CD4-positive, alpha-beta memory T cell (primary cell): ENCODE measurements at regions of chr3 and their contacts with region 1.

Region 1: GRCh38 chr3:66500576-66501482 is at the start of gene LRIG1:
- DNase-seq: peak; percentile 97 to 98 (median 97)
- H3K4me3 ChIP-seq: peak within 1 kb of the TSS; percentile 9 to 72
- H3K4me3 Mint-ChIP-seq: peak within 1 kb of the TSS; percentile 93 to 99 (median 98)
- H3K27ac ChIP-seq: peak within 1 kb of the TSS; percentile 61
- H3K27ac Mint-ChIP-seq: peak within 1 kb of the TSS; percentile 82 to 96 (median 89)
- H3K4me1 ChIP-seq: peaks cover 61% of the 10 kb centered on the region
- H3K4me1 Mint-ChIP-seq: peaks cover 50 to 73% (median 59%) of the 10 kb centered on the region in 4 donors
- H3K27me3 ChIP-seq: no peaks in the 10 kb centered on the region
- H3K27me3 Mint-ChIP-seq: no peaks in the 10 kb centered on the region
- total RNA-seq, gene LRIG1: 66.3 to 71.7 TPM

Region 2: GRCh38 chr3:65861718-65862117 is 639.1 kb before region 1 on chr3:
- CTCF ChIA-PET with region 1: no interaction called
- POLR2A ChIA-PET with region 1: no interaction called
- intact Hi-C with region 1: no loop called
- DNase-seq: no peak
- H3K4me3 ChIP-seq: no peak overlapping the region
- H3K4me3 Mint-ChIP-seq: no peak overlapping the region
- H3K27ac ChIP-seq: no peak overlapping the region
- H3K27ac Mint-ChIP-seq: no peak overlapping the region
- H3K4me1 ChIP-seq: no peaks in the 10 kb centered on the region
- H3K4me1 Mint-ChIP-seq: no peaks in the 10 kb centered on the region
- H3K27me3 ChIP-seq: no peaks in the 10 kb centered on the region
- H3K27me3 Mint-ChIP-seq: no peaks in the 10 kb centered on the region

Region 3: DNA sequence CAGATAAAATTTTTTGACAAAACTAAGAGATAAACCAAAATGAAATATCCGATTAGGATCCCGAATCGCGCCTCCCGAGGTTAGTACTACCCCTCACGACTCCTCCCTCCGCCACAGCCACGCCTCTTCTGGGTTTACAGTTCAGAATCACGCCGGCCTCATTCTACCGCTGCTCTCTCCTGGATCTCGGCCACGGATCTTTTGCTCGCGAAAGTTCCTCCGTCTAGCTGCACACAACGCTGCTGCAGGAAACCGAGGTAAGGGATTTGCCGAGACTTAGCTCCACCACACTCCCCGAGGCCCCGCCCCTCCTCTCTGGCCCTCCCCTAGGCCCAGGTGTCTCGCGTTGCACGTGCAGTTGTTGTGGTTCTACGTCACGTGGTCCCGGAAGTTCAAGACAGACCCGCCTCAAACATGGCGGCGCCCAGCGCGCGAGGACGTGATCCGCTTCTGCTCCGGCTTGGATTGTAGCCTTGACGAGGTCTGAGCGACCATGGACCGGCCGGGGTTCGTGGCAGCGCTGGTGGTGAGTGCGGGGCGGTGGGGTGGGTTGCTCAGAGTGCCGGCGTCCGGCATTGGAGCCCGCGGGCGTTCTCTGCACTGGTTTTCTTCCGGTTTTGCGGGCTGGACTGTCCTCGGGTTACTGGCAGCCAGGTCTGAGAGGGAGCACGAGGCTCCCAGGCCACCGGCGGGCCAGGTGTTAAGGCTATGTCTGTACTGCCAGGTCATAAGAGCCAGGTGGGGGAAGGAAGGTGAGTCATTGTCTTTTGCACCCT is 280.0 kb before region 1 on chr3 and contains the start of gene SLC25A26:
- CTCF ChIA-PET with region 1: no interaction called
- POLR2A ChIA-PET with region 1: interaction called, 8 read pairs
- intact Hi-C with region 1: loop called (anchors 1 kb)
- DNase-seq: peak; percentile 96 to 100 (median 98)
- H3K4me3 ChIP-seq: peak within 1 kb of the TSS; percentile 67 to 82
- H3K4me3 Mint-ChIP-seq: peak within 1 kb of the TSS; percentile 87 to 99 (median 92)
- H3K27ac ChIP-seq: peak within 1 kb of the TSS; percentile 73
- H3K27ac Mint-ChIP-seq: peak within 1 kb of the TSS; percentile 76 to 99 (median 91)
- H3K4me1 ChIP-seq: peaks cover 15% of the 10 kb centered on the region
- H3K4me1 Mint-ChIP-seq: peaks cover 16 to 44% (median 32%) of the 10 kb centered on the region in 4 donors
- H3K27me3 ChIP-seq: no peaks in the 10 kb centered on the region
- H3K27me3 Mint-ChIP-seq: no peaks in the 10 kb centered on the region
- total RNA-seq, gene SLC25A26: 18.9 to 21.1 TPM

Region 4: GRCh38 chr3:66394019-66394752 is 106.6 kb before region 1 on chr3:
- CTCF ChIA-PET with region 1: no interaction called
- POLR2A ChIA-PET with region 1: interaction called, 12 read pairs
- intact Hi-C with region 1: loop called (anchors 5 kb)
- DNase-seq: peak; percentile 74 to 83 (median 81)
- H3K4me3 ChIP-seq: peak overlapping the region; percentile 44 to 49
- H3K4me3 Mint-ChIP-seq: peak overlapping the region; percentile 75 to 94 (median 90)
- H3K27ac ChIP-seq: peak overlapping the region; percentile 45
- H3K27ac Mint-ChIP-seq: peak overlapping the region; percentile 90 to 99 (median 97)
- H3K4me1 ChIP-seq: peaks cover 59% of the 10 kb centered on the region
- H3K4me1 Mint-ChIP-seq: peaks cover 50 to 61% (median 56%) of the 10 kb centered on the region in 4 donors
- H3K27me3 ChIP-seq: no peaks in the 10 kb centered on the region
- H3K27me3 Mint-ChIP-seq: no peaks in the 10 kb centered on the region

Region 5: DNA sequence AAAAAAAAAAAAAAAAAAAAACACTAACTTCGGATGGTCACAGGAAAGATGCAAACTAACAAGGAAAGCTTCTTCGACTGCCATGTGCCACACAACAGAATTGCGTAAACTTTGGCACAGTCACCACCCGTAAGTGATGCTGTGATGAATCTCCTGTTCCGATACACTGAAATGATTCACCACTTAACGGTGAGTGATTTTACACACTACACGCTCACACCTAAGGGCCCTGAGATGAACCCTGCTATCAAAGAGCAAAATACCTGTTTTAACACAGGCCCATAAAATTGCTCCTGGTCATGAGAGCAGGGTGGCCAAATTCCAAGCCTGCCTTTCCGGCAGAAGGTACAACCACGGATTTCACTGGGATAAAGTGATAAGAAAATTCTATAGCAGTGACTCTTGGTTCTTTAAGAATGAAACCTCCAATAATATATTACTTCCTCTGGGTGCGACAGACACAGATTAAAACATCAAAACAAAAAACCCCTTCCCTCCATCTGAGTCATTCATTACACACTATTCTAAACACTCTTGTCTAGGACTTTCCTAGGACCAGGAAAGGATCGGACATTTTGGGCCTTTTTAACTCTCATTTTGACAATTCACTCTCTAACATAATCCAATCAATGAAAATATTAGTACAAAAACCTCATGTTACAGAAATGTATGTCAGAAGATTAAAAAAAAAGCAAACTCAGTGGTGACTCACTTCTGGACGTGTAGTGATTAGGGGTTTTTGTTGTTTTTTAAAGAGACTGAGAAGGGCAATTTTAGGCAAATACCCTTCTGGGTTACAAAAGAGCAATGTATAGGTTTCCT is 28.3 kb before region 1 on chr3:
- CTCF ChIA-PET with region 1: interaction called, 3 read pairs
- POLR2A ChIA-PET with region 1: interaction called, 13 read pairs
- intact Hi-C with region 1: loop called (anchors 1 kb)
- DNase-seq: peak in 2 of 5 donors; percentile 48 to 74
- H3K4me3 ChIP-seq: peak overlapping the region; percentile 23 to 50
- H3K4me3 Mint-ChIP-seq: peak overlapping the region; percentile 57 to 86 (median 75)
- H3K27ac ChIP-seq: peak overlapping the region; percentile 29
- H3K27ac Mint-ChIP-seq: peak overlapping the region; percentile 0 to 90 (median 77)
- H3K4me1 ChIP-seq: peaks cover 92% of the 10 kb centered on the region
- H3K4me1 Mint-ChIP-seq: peaks cover 30 to 51% (median 41%) of the 10 kb centered on the region in 4 donors
- H3K27me3 ChIP-seq: no peaks in the 10 kb centered on the region
- H3K27me3 Mint-ChIP-seq: no peaks in the 10 kb centered on the region

Region 6: DNA sequence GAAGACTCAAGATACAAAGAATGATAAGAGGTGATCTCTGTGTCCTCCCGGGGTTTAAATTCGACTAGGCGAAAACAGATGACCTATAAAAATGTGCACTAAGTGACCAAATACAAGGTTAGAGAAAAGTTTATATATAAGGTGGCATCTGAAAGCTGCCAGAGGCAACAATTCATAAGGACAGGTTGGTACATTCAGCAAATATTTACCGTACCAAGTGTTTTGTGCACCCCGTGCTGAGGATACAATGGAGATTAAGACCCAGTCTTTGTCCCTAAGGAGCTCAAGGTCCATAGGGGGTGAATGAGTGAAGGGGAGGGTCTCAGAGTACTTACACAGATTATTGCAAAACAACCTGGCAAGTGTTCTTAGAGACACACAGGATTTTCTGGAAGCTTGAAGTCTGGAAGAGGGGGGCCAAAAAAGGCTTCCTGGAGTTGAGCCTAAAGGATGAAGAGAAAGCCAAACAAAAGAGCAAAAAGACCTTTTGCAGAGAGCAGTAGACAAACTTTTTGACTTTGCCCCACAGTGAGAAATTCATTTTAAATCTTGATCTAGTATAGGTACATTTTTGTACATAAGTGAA is 71.4 kb after region 1 on chr3:
- CTCF ChIA-PET with region 1: no interaction called
- POLR2A ChIA-PET with region 1: no interaction called
- intact Hi-C with region 1: no loop called
- DNase-seq: no peak
- H3K4me3 ChIP-seq: no peak overlapping the region
- H3K4me3 Mint-ChIP-seq: no peak overlapping the region
- H3K27ac ChIP-seq: no peak overlapping the region
- H3K27ac Mint-ChIP-seq: no peak overlapping the region
- H3K4me1 ChIP-seq: no peaks in the 10 kb centered on the region
- H3K4me1 Mint-ChIP-seq: peaks cover 0 to 5% (median 3%) of the 10 kb centered on the region in 4 donors
- H3K27me3 ChIP-seq: no peaks in the 10 kb centered on the region
- H3K27me3 Mint-ChIP-seq: peaks cover 0 to 2% of the 10 kb centered on the region in 2 donors

Region 7: GRCh38 chr3:66582721-66583423 is 82.0 kb after region 1 on chr3:
- CTCF ChIA-PET with region 1: no interaction called
- POLR2A ChIA-PET with region 1: interaction called, 5 read pairs
- intact Hi-C with region 1: loop called (anchors 2 kb)
- DNase-seq: peak; percentile 63 to 75 (median 71)
- H3K4me3 ChIP-seq: no peak overlapping the region
- H3K4me3 Mint-ChIP-seq: peak overlapping the region in 5 of 8 donors; percentile 27 to 60 (median 47)
- H3K27ac ChIP-seq: no peak overlapping the region
- H3K27ac Mint-ChIP-seq: peak overlapping the region in 1 of 7 donors; percentile 39
- H3K4me1 ChIP-seq: peaks cover 21% of the 10 kb centered on the region
- H3K4me1 Mint-ChIP-seq: peaks cover 11 to 17% (median 15%) of the 10 kb centered on the region in 4 donors
- H3K27me3 ChIP-seq: no peaks in the 10 kb centered on the region
- H3K27me3 Mint-ChIP-seq: peaks cover 10 to 17% of the 10 kb centered on the region in 2 donors

Region 8: DNA sequence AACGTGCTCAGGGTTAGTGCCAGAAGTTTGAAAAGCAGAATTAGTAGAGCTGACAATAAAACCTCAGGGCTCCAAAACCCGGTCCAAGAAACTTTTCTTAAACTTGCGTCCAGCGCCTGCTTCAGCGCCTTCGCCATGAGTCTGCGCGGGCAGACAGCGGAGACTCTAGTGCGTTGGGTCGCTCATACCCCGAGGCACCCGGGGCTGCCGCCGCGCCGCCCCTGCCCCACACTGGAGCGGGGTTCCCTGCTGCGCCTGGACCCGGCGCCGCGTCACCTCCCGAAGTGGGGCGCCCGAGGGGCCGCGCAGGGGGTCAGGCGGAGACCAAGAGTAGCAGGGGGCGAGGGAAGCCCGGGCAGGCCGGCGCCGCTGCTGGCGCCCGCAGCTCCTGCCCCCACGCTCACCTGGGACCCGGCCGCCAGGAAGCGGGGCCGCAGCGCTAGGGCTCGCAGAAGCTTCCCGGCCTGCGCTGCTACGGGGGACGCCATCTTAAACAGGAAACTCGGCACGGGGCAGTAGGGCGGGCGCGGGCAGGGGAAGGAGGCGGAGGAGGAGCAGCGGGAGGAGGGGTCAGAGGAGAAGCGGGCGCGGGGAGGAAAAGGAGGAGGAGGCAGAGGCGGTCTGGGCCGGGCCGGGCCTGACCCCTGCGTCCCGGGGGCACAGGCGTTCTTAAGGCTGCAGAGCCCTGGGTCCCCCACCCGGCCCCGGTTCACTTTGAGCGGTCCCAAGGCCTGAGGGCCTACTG is 1153.4 kb after region 1 on chr3 and contains the start of gene SUCLG2:
- CTCF ChIA-PET with region 1: no interaction called
- POLR2A ChIA-PET with region 1: no interaction called
- intact Hi-C with region 1: loop called (anchors 10 kb)
- DNase-seq: peak; percentile 71 to 85 (median 77)
- H3K4me3 ChIP-seq: peak within 1 kb of the TSS; percentile 71 to 80
- H3K4me3 Mint-ChIP-seq: peak within 1 kb of the TSS; percentile 84 to 90 (median 88)
- H3K27ac ChIP-seq: peak within 1 kb of the TSS; percentile 67
- H3K27ac Mint-ChIP-seq: peak within 1 kb of the TSS; percentile 91 to 97 (median 95)
- H3K4me1 ChIP-seq: peaks cover 67% of the 10 kb centered on the region
- H3K4me1 Mint-ChIP-seq: peaks cover 48 to 76% (median 60%) of the 10 kb centered on the region in 4 donors
- H3K27me3 ChIP-seq: no peaks in the 10 kb centered on the region
- H3K27me3 Mint-ChIP-seq: no peaks in the 10 kb centered on the region
- total RNA-seq, gene SUCLG2: 46.1 to 48.0 TPM